ENCODE measurements at regions of chr3 and their contacts with region 1.

Region 1: GRCh38 chr3:172102123-172102882 is 62.9 kb downstream of the FNDC3B start:
- DNase-seq: no peak
- H3K4me3 Mint-ChIP-seq: no peak overlapping the region
- H3K27ac Mint-ChIP-seq: peak overlapping the region; percentile 76
- H3K4me1 Mint-ChIP-seq: peaks cover 48% of the 10 kb centered on the region
- H3K27me3 Mint-ChIP-seq: no peaks in the 10 kb centered on the region
- CTCF ChIP-seq: no peak

Region 2: DNA sequence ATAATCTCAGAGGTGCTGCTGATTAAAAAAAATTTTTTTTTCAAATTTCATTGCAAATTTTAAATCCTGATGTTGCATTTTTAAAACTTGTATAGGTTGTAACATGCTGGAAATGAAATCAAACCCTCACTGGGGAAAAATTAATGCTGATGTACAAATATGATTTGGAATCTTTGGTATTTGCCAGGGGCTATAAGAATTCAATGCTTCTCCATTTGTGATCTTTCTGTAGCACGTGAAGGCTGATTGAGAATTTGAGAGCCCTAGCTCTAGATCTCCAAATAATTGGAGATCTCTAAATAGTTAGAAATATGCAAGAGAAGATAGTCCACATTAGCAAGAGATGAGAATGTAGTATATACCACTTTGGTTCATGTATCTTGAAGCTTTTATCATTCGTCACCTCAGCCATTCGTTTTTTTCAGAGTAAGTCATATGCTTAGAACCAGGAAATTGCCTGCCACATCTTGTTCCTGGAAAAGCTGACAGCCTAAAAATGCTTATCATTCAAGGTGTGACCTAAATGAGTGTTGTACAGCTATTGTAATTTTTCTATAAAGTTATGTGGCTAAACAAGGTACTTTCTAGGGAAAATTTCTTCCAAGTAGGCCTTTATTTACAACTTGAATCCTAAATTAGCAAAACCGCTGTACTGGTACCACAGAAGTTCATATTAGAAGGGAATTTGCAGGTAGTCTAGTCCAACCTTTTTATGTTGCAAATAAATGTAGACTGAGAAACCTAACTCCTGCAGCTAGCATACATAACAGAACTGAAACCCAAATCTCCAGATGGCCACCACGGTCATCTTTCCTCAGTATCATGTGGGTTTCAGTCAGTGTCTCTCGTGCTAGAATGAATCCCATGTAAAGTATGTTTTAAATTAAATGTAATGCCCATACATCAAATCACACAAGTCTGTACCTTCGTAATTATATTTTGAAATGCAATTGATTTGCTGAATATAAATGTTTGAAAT is 14.4 kb before region 1 on chr3:
- CTCF ChIA-PET with region 1: interaction called, 7 read pairs
- POLR2A ChIA-PET with region 1: interaction called, 84 read pairs
- intact Hi-C with region 1: no loop called
- DNase-seq: no peak
- H3K4me3 Mint-ChIP-seq: peak overlapping the region; percentile 48
- H3K27ac Mint-ChIP-seq: peak overlapping the region; percentile 75
- H3K4me1 Mint-ChIP-seq: peaks cover 35% of the 10 kb centered on the region
- H3K27me3 Mint-ChIP-seq: no peaks in the 10 kb centered on the region
- CTCF ChIP-seq: no peak

Region 3: DNA sequence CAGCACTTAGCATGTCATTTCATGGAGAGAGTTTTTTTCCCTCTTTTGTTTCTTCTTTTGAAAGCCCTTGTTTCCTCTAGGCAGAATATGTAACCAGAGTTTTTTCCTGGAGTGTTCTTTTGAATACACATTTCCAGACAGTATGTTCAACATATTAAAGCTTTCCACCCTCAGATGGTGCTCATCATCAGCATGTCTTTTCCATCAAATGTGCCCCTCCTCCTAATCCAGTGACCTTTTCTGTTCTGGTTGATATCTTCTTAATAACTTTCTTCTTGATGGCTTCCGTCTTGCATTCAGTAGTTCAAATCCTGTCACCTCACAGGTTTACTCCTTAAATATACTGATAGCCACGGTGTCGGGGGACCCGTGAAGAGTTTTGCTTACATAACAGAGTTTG is 15.7 kb after region 1 on chr3:
- CTCF ChIA-PET with region 1: interaction called, 3 read pairs
- POLR2A ChIA-PET with region 1: interaction called, 17 read pairs
- intact Hi-C with region 1: no loop called
- DNase-seq: no peak
- H3K4me3 Mint-ChIP-seq: no peak overlapping the region
- H3K27ac Mint-ChIP-seq: peak overlapping the region; percentile 58
- H3K4me1 Mint-ChIP-seq: peaks cover 5% of the 10 kb centered on the region
- H3K27me3 Mint-ChIP-seq: no peaks in the 10 kb centered on the region
- CTCF ChIP-seq: no peak